ENCODE measurements at regions of chr5 and their contacts with region 1.

Region 1: DNA sequence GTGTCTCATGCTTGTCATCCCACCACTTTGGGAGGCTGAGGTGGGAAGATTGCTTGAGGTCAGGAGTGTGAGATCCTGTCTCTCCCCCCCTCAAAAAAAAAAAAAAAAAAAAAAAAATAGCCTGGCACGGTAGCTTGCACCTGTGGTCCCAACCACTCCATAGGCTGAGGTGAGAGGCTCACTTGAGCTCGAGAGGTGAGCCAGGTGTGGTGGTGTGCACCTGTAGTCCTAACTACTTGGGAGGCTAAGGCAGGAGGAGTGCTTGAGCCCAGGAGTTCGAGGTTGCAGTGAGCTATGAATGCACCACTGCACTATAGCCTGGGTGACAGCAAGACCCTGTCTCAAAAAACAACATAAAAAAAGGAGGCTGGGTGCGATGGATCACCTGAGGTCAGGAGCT is 9.7 kb upstream of the ETF1 start:
- DNase-seq: no peak
- ATAC-seq: no peak; the same call in 2 of the 3 replicates
- H3K4me3 ChIP-seq: no peak overlapping the region
- H3K27ac ChIP-seq: no peak overlapping the region
- H3K4me1 ChIP-seq: peaks cover 7% of the 10 kb centered on the region
- H3K27me3 ChIP-seq: no peaks in the 10 kb centered on the region
- CTCF ChIP-seq: no peak
- EP300 ChIP-seq: no peak
- POLR2A ChIP-seq: peak in 1 of 2 experiments; percentile 45; a peak in 1 of 4 replicates
- RAD21 ChIP-seq: no peak

Region 2: DNA sequence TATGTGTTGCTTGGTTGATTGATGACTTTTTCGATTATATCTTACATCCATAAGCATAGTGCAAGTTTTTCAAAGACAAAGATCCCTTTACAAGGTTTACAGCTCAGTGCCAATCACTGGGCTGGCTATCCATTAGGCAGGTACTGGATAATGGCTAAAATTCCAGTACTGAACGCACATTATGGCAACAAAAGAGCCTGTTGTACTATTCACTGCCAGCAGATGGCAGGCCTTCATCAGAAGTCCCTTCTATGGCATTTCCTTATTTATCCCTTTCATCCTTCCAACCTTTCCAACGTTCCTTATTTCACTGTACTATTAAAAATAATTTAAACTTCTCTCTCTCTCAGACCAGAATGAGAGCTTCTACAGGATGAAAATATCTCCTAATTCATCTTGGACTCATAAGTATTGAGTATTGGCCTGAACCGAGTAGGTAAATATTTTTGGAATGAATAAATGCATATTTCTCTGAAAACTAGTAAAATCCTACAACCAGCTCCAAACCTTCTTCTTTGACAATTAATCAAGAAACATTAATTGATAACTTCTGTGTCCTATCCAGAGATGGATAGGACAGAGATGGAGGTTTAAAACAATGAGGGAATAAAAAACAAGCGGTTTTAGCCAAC is 475.5 kb before region 1 on chr5:
- CTCF ChIA-PET with region 1: no interaction called
- POLR2A ChIA-PET with region 1: no interaction called
- in situ Hi-C with region 1: no loop called
- intact Hi-C with region 1: no loop called
- DNase-seq: peak; percentile 61
- ATAC-seq: peak; percentile 71
- H3K4me3 ChIP-seq: no peak overlapping the region
- H3K27ac ChIP-seq: no peak overlapping the region
- H3K4me1 ChIP-seq: peaks cover 12% of the 10 kb centered on the region
- H3K27me3 ChIP-seq: no peaks in the 10 kb centered on the region; a peak in 1 of 5 replicates
- CTCF ChIP-seq: peak; percentile 85
- EP300 ChIP-seq: no peak
- POLR2A ChIP-seq: no peak
- RAD21 ChIP-seq: peak; percentile 75

Region 3: DNA sequence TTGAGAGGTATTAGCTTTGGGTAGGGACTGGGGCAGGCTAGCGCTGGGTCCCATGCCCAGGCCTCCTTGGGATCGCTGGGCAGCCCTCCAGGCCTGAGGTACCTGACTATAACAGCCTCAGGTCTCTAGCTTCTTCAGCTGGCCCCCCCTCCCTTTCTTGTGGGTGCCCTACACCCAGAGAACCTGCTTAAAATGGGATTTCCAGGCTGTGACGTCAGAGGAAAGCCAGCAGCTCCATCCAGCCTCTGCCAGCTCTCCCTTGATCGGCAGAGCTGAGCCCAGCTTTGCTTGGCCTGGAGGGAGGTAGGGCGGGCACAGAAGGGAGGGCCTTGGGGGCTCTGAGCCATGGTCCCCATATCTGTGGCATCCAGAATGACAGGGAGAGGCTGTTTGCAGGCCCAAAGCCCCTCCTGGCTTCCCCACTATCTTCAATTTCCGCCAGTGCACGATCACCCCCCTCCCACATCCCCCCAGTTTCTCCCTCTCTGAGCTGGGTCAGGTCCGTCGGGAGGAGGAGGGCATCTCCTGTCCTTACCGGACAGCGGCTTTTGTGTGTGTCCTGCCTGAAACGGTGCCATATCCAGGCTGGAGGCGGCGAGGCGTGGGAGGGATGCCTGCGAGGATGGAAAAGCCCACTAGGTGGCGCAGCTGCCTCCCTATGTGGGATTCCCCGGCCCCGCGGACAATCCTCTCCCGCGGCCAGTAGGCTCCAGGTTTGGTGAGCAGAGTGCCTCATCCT is 103.0 kb before region 1 on chr5:
- CTCF ChIA-PET with region 1: interaction called, 12 read pairs
- POLR2A ChIA-PET with region 1: interaction called, 5 read pairs
- in situ Hi-C with region 1: no loop called
- intact Hi-C with region 1: no loop called
- DNase-seq: peak; percentile 63
- ATAC-seq: peak; percentile 86
- H3K4me3 ChIP-seq: peak overlapping the region; percentile 11 to 65 (median 24); a peak in 4 of 6 replicates
- H3K27ac ChIP-seq: no peak overlapping the region
- H3K4me1 ChIP-seq: peaks cover 40% of the 10 kb centered on the region
- H3K27me3 ChIP-seq: peaks cover 4 to 26% of the 10 kb centered on the region in 2 experiments; a peak in 3 of 5 replicates
- CTCF ChIP-seq: peak; percentile 99
- EP300 ChIP-seq: no peak
- POLR2A ChIP-seq: no peak
- RAD21 ChIP-seq: peak; percentile 94

Region 4: GRCh38 chr5:138568061-138568824 is 15.5 kb after region 1 on chr5:
- CTCF ChIA-PET with region 1: no interaction called
- POLR2A ChIA-PET with region 1: interaction called, 11 read pairs
- in situ Hi-C with region 1: no loop called
- intact Hi-C with region 1: no loop called
- DNase-seq: no peak
- ATAC-seq: peak; percentile 13; the same call in 2 of the 3 replicates
- H3K4me3 ChIP-seq: no peak overlapping the region
- H3K27ac ChIP-seq: peak overlapping the region; percentile 19
- H3K4me1 ChIP-seq: peaks cover 75% of the 10 kb centered on the region
- H3K27me3 ChIP-seq: no peaks in the 10 kb centered on the region
- CTCF ChIP-seq: no peak
- EP300 ChIP-seq: no peak
- POLR2A ChIP-seq: no peak; a peak in 1 of 4 replicates
- RAD21 ChIP-seq: no peak